ENCODE measurements at regions of chr11 and their contacts with region 1.

Region 1: DNA sequence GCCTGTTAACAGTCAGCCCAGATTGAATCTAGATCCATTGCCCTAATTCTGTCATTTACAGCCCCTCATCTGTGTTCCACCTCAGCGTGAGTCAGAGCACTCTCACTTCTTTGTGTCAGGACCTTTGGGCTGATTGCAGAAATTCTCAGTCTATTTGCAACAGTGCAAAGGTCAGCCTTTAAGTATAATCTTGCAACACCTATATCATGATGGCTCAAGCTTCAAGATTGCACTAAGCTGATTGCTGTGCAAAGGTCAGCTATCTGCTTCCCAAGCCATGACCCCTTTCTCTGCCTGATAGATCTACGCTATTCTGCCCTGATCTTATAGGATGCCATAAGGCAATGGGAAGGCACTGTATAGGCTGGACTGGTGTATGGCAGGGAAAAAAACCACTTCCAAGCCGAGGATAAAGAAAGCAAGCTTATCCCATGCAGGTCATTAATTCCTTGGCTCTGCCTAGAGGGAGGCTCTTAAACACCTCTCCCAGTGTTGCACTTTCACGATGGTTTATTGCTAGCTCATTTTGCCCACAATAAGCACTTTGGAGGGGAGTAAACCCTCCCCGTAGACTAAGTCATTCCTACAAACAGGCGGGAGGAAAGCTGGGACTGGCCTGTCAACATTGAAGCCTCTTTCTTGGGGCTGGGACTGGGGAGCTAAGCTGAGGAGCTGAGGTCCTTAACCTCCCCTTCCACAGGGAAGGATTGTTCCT is 100.6 kb downstream of the RRAS2 start:
- DNase-seq: no peak
- ATAC-seq: peak; percentile 50 to 63
- H3K4me3 ChIP-seq: no peak overlapping the region
- H3K27ac ChIP-seq: no peak overlapping the region
- H3K4me1 ChIP-seq: peaks cover 21% of the 10 kb centered on the region
- H3K27me3 ChIP-seq: peaks cover 3% of the 10 kb centered on the region
- CTCF ChIP-seq: no peak

Region 2: GRCh38 chr11:13955971-13956421 is 302.4 kb before region 1 on chr11:
- intact Hi-C with region 1: loop called (anchors 10 kb)
- DNase-seq: peak; percentile 51
- ATAC-seq: peak; percentile 80 to 86
- H3K4me3 ChIP-seq: no peak overlapping the region
- H3K27ac ChIP-seq: no peak overlapping the region
- H3K4me1 ChIP-seq: no peaks in the 10 kb centered on the region
- H3K27me3 ChIP-seq: peaks cover 2% of the 10 kb centered on the region
- CTCF ChIP-seq: peak; percentile 84

Region 3: DNA sequence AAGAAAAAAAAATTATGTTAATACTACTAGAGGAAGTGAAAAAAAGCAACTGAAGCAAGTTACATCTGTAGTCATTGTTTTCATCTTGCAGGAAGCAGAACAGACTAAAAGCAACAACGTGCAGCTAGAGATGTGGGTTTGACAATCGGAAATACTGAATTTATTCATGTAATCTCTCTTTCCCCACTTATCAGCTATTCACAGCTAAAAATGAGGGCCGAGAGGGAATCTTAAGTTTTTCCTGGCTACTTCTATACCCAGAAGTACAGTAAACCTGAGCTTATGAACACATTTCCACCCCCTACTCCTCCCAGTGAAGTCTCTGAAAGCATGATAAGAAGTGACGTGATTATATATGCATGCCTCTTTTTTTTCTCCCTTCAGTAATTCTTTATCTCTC is 179.4 kb before region 1 on chr11:
- intact Hi-C with region 1: no loop called
- DNase-seq: no peak
- ATAC-seq: no peak
- H3K4me3 ChIP-seq: no peak overlapping the region
- H3K27ac ChIP-seq: no peak overlapping the region
- H3K4me1 ChIP-seq: no peaks in the 10 kb centered on the region
- H3K27me3 ChIP-seq: no peaks in the 10 kb centered on the region
- CTCF ChIP-seq: no peak

Region 4: DNA sequence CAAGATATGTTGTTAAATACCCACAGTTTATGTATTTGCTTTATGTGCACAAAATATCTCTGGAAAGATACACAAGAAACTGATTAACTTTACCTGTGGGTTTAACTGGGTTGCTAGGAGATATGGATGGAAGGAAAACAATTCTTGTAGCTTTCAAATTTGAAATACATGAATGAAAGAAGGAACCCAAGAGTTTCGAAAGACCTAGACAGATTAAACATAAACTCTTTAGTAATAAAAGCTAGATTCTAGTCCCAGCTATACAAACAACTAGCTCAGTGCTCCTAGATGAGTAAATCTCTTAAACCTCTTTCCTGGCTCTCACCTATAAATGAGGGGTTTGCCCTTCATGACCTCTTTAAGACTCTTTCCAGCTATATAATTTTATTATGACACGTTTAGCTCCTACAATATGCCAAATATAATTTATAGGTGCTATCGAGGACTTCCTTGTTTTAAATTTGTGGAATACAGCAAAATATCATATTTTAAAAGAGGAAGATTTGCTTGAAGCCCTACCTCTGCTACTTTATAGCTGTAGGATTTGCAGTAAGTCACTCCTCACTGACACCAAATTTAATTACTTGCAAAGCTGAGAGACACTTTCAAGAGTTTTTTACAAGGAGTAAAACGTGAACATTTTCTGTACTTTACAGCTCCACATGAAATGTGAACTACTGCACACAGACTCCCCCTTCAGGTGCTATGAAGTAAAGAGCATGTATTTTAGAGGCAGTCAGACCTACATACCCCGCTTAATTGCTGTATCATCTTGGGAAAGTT is 49.9 kb after region 1 on chr11:
- intact Hi-C with region 1: no loop called
- DNase-seq: no peak
- ATAC-seq: peak; percentile 60 to 79
- H3K4me3 ChIP-seq: no peak overlapping the region
- H3K27ac ChIP-seq: peak overlapping the region; percentile 5
- H3K4me1 ChIP-seq: peaks cover 38% of the 10 kb centered on the region
- H3K27me3 ChIP-seq: no peaks in the 10 kb centered on the region
- CTCF ChIP-seq: peak; percentile 46

Region 5: DNA sequence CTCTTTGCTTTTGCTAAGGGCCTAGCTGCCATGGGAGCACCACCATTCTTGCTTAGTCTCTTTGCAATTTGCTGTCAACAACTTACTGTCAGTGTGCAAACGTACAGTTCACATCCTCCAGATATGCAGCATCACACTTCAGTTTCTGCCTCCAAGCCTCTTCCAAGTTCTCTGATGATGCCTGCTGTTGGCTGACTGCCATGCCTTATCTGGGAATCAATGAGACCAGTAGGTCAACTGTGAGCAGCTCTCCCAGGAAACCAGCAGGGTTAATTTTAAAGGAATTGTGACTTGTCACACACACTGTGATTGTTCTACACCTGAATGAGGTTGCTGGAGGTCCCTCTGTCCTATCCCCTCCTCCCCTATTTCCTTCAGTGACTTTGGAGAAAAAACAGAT is 185.3 kb after region 1 on chr11:
- intact Hi-C with region 1: no loop called
- DNase-seq: no peak
- ATAC-seq: no peak
- H3K4me3 ChIP-seq: no peak overlapping the region
- H3K27ac ChIP-seq: no peak overlapping the region
- H3K4me1 ChIP-seq: peaks cover 4% of the 10 kb centered on the region
- H3K27me3 ChIP-seq: no peaks in the 10 kb centered on the region
- CTCF ChIP-seq: no peak

Measured in lower lobe of right lung (tissue), 2 donors.